ENCODE measurements at regions of chr1 and their contacts with region 1.

Region 1: DNA sequence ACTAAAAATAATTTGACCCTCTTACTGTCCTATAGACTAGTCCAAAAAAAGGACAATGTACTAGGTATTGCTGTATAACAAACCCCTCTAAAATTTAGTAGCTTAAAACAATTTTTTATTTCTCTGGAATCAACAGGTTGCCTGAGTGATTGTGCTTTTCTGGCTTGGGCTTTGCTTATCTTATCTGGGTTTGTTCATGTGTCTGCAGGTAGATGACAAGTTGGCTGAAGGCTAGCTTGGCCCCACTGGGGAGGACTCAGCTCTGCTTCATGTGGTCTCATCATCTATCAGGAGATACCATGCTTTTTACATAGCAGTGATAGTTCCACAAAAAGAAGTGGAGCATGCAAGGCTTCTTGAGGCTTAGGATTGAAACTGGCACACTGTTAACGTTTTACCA is 114.2 kb downstream of the MAN1A2 start:
- DNase-seq: no peak
- H3K4me3 ChIP-seq: no peak overlapping the region
- H3K27ac ChIP-seq: no peak overlapping the region
- H3K4me1 ChIP-seq: no peaks in the 10 kb centered on the region
- H3K27me3 ChIP-seq: no peaks in the 10 kb centered on the region
- CTCF ChIP-seq: no peak

Region 2: DNA sequence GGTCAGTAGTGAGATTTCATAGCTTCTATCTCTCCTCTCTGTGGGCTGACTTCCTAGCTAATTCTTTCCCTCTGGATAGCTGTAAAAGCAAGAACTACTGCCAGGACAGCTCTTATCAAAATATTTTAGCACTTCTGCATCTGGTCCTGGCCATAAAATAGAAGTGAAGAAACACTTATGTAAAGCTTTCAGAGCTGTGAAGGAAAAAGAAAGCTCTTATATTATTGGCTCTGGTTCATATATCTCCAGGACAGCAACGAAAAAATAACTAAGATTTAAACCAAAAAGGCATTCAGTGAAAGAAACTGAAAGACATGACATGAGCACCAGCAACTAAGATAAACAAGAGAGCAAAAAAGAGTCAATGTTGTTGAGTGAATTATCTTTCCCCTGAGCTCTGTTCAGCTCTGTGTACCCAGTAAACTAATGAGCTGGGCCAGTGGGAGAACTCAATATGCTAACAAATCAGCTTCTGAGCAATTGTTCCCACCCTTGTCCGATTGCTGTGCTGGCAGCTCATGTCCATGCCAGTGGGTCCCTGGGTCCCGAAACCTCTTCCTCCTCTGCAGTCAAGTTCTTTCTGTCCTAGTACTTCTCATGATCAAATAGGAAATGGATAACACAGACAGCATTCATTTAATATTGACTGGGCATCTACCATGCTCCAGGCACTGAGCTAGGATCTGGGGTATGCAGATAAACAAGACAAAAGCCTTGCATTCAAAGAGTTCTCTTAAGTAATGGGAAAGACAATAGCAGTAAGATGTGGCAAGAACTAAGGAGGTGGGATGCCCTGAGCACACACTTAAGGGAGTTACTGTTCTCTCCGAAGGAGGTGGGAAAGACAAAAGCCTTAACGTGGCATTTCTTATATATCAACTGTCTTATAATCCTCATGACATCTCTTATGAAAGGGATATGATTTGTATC is 159.5 kb before region 1 on chr1:
- intact Hi-C with region 1: loop called (anchors 10 kb)
- DNase-seq: no peak
- H3K4me3 ChIP-seq: no peak overlapping the region
- H3K27ac ChIP-seq: no peak overlapping the region
- H3K4me1 ChIP-seq: no peaks in the 10 kb centered on the region
- H3K27me3 ChIP-seq: no peaks in the 10 kb centered on the region
- CTCF ChIP-seq: no peak